OCI-LY7 (cell line): ENCODE measurements at regions of chr15 and their contacts with region 1.

Region 1: DNA sequence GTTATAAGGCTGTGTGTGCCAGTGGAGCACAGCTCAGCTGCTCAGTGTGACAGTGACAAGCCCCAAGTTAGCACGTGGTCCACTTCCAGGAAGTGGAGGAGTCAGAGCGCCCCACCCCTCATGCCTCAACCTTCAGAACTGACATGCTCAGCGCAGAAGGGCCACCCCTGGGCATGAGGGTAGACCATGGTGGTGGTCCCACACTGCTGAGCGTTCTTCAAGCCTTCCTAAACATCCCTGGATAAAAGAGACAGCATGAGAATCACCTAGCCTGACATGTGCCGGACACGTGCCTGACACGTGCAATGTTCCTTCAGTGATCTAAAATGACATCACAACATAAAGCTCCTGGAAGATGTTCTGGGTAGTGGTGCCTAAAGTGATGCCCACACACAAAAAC is 16.8 kb downstream of the ATP10A start:
- DNase-seq: peak; percentile 59
- H3K4me3 ChIP-seq: no peak overlapping the region
- H3K27ac ChIP-seq: peak overlapping the region; percentile 69
- H3K4me1 ChIP-seq: peaks cover 85% of the 10 kb centered on the region
- CTCF ChIP-seq: no peak

Region 2: GRCh38 chr15:25790000-25790660 is 56.2 kb before region 1 on chr15:
- CTCF ChIA-PET with region 1: no interaction called
- POLR2A ChIA-PET with region 1: interaction called, 3 read pairs
- intact Hi-C with region 1: loop called (anchors 2 kb)
- DNase-seq: peak; percentile 34
- H3K4me3 ChIP-seq: no peak overlapping the region
- H3K27ac ChIP-seq: no peak overlapping the region
- H3K4me1 ChIP-seq: peaks cover 47% of the 10 kb centered on the region
- CTCF ChIP-seq: 0 out of 2 replicates have a peak, but pooled peaks have one; percentile 12

Region 3: GRCh38 chr15:25801586-25802284 is 44.6 kb before region 1 on chr15:
- CTCF ChIA-PET with region 1: no interaction called
- POLR2A ChIA-PET with region 1: interaction called, 4 read pairs
- intact Hi-C with region 1: loop called (anchors 2 kb)
- DNase-seq: no peak
- H3K4me3 ChIP-seq: no peak overlapping the region
- H3K27ac ChIP-seq: peak overlapping the region; percentile 58
- H3K4me1 ChIP-seq: peaks cover 55% of the 10 kb centered on the region
- CTCF ChIP-seq: no peak

Region 4: GRCh38 chr15:25939122-25939521 is 92.7 kb after region 1 on chr15:
- CTCF ChIA-PET with region 1: interaction called, 3 read pairs
- POLR2A ChIA-PET with region 1: interaction called, 7 read pairs
- intact Hi-C with region 1: loop called (anchors 2 kb)
- DNase-seq: peak; percentile 92
- H3K4me3 ChIP-seq: peak overlapping the region; percentile 2
- H3K27ac ChIP-seq: peak overlapping the region; percentile 78
- H3K4me1 ChIP-seq: peaks cover 28% of the 10 kb centered on the region
- CTCF ChIP-seq: no peak